GM12878 (cell line): ENCODE measurements at regions of chr15 and their contacts with region 1.

Region 1: DNA sequence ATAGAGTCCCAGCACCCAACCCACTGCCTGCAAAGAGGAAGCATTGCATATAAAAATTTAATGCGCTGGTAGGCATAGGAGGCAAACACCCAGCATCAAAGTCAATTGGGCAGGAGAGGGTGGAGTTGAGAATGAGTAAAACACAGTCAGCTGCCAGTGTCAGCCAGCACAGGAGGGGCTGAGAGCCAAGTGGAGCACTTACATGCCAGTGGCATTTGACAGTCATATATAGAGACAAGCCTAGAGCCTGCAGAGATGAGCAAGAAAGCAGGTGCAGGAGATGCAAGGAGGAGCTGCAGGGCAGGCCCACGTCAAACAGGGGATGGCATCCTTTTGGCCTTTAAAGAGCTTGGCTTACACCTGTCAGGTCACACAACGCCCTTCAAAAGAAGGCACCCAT is 27.6 kb upstream of the ZFAND6 start:
- DNase-seq: no peak
- ATAC-seq: peak; percentile 35
- H3K4me3 ChIP-seq: no peak overlapping the region
- H3K27ac ChIP-seq: no peak overlapping the region; the same call in 1 of the 2 replicates
- H3K4me1 ChIP-seq: peaks cover 47% of the 10 kb centered on the region
- H3K27me3 ChIP-seq: no peaks in the 10 kb centered on the region
- CTCF ChIP-seq: no peak
- EP300 ChIP-seq: no peak
- POLR2A ChIP-seq: no peak
- RAD21 ChIP-seq: no peak

Region 2: DNA sequence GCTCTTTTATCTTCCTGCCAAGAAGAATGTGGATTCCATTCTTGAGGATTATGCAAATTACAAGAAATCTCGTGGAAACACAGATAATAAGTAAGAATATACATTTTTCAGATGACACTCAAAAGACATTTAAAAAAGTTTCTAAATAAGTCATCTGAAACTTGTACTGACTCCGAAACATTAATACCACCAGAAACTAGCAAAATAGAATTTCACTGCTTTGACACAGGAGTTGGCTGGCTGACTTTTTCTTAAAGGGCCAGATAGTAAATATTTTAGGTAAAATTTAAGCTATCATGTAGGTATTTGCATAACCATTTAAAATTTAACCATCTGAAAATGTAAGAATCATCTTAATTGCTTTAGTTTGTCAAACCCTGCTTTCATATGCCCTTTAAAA is 1138.3 kb before region 1 on chr15:
- CTCF ChIA-PET with region 1: no interaction called
- POLR2A ChIA-PET with region 1: no interaction called
- RAD21 ChIA-PET with region 1: no interaction called
- SMC1A ChIA-PET with region 1: no interaction called
- in situ Hi-C with region 1: no loop called
- intact Hi-C with region 1: no loop called
- DNase-seq: no peak
- ATAC-seq: peak; percentile 74
- H3K4me3 ChIP-seq: peak overlapping the region; percentile 2; the same call in 1 of the 2 replicates
- H3K27ac ChIP-seq: no peak overlapping the region
- H3K4me1 ChIP-seq: peaks cover 10% of the 10 kb centered on the region
- H3K27me3 ChIP-seq: no peaks in the 10 kb centered on the region
- CTCF ChIP-seq: no peak
- EP300 ChIP-seq: no peak
- POLR2A ChIP-seq: no peak
- RAD21 ChIP-seq: no peak

Region 3: DNA sequence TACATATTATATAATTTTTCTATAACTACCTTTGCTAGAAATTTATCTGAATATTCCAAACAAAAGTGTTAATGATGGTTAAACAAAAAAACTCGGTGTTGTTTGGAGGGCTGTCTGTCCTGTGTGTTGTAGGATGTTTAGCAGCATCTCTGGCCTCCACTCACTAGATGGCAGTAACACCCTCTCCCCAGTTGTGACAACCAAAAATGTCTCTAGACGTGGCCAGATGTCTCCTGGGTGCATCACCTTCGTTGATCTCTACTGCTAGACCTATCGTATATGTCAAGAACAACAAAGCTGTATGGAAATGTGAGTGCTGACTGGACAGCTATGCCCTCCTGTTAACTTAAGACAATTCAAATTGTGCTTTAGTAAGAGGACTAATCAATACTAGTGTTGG is 735.3 kb before region 1 on chr15:
- CTCF ChIA-PET with region 1: no interaction called
- POLR2A ChIA-PET with region 1: no interaction called
- RAD21 ChIA-PET with region 1: no interaction called
- SMC1A ChIA-PET with region 1: no interaction called
- in situ Hi-C with region 1: no loop called
- intact Hi-C with region 1: no loop called
- DNase-seq: no peak
- ATAC-seq: peak; percentile 78
- H3K4me3 ChIP-seq: no peak overlapping the region
- H3K27ac ChIP-seq: no peak overlapping the region
- H3K4me1 ChIP-seq: no peaks in the 10 kb centered on the region
- H3K27me3 ChIP-seq: peaks cover 0 to 9% of the 10 kb centered on the region in 2 experiments; a peak in 1 of 4 replicates
- CTCF ChIP-seq: peak; percentile 24 to 45 (median 25); a peak in 5 of 6 replicates
- EP300 ChIP-seq: no peak
- POLR2A ChIP-seq: no peak
- RAD21 ChIP-seq: no peak

Region 4: GRCh38 chr15:80010131-80010673 is 21.6 kb before region 1 on chr15:
- CTCF ChIA-PET with region 1: no interaction called
- POLR2A ChIA-PET with region 1: interaction called, 3 read pairs
- RAD21 ChIA-PET with region 1: interaction called, 5 read pairs
- SMC1A ChIA-PET with region 1: interaction called, 98 read pairs
- in situ Hi-C with region 1: no loop called
- intact Hi-C with region 1: loop called (anchors 2 kb)
- DNase-seq: no peak
- ATAC-seq: peak; percentile 61
- H3K4me3 ChIP-seq: peak overlapping the region; percentile 32; the same call in 1 of the 2 replicates
- H3K27ac ChIP-seq: peak overlapping the region; percentile 93
- H3K4me1 ChIP-seq: peaks cover 43% of the 10 kb centered on the region
- H3K27me3 ChIP-seq: no peaks in the 10 kb centered on the region
- CTCF ChIP-seq: no peak
- EP300 ChIP-seq: no peak
- POLR2A ChIP-seq: no peak
- RAD21 ChIP-seq: no peak

Region 5: GRCh38 chr15:80019168-80019745 is 12.6 kb before region 1 on chr15:
- CTCF ChIA-PET with region 1: interaction called, 9 read pairs
- POLR2A ChIA-PET with region 1: interaction called, 31 read pairs
- RAD21 ChIA-PET with region 1: interaction called, 41 read pairs
- SMC1A ChIA-PET with region 1: interaction called, 98 read pairs
- in situ Hi-C with region 1: no loop called
- intact Hi-C with region 1: loop called (anchors 2 kb)
- DNase-seq: no peak
- ATAC-seq: peak; percentile 4
- H3K4me3 ChIP-seq: peak overlapping the region; percentile 60
- H3K27ac ChIP-seq: peak overlapping the region; percentile 92
- H3K4me1 ChIP-seq: peaks cover 30% of the 10 kb centered on the region
- H3K27me3 ChIP-seq: no peaks in the 10 kb centered on the region
- CTCF ChIP-seq: no peak
- EP300 ChIP-seq: peak; percentile 8 to 43; a peak in 1 of 4 replicates
- POLR2A ChIP-seq: no peak
- RAD21 ChIP-seq: no peak

Region 6: DNA sequence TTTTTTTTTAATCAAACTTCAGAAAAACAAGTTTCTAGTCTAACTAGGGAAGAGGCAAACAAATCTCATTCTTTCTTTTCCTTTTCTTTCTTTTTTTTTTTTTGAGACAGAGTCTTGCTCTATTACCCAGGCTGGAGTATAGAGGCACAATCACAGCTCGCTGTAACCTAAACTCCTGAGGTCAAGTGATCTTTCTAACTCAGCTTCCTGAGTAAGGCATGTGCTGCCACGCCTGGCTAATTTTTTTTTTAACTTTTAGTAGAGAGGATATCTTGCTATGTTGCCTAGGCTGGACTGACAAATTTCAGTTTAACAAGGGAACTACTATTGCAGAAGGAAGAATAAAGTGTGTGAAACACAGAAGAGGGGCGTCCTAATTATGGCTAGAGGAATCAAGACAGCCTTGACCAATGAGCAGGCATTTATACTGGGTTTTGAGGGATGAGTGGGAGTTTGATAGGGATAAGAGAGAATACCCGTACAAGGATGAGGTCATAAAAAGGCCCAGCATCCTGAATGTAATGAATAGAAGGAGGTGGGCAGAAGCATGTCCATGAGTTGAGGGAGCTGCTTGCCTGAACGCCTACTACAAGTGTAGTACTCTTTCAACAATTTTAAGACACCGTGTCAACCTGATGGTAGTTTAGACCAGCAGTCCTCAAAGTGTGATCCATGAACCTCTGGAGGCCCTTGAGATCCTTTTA is 20.9 kb after region 1 on chr15:
- CTCF ChIA-PET with region 1: interaction called, 4 read pairs
- POLR2A ChIA-PET with region 1: interaction called, 4 read pairs
- RAD21 ChIA-PET with region 1: interaction called, 4 read pairs
- SMC1A ChIA-PET with region 1: interaction called, 10 read pairs
- in situ Hi-C with region 1: no loop called
- intact Hi-C with region 1: loop called (anchors 1 kb)
- DNase-seq: no peak
- ATAC-seq: peak; percentile 46
- H3K4me3 ChIP-seq: no peak overlapping the region
- H3K27ac ChIP-seq: peak overlapping the region; percentile 37; the same call in 1 of the 2 replicates
- H3K4me1 ChIP-seq: peaks cover 29% of the 10 kb centered on the region
- H3K27me3 ChIP-seq: no peaks in the 10 kb centered on the region; a peak in 1 of 4 replicates
- CTCF ChIP-seq: no peak
- EP300 ChIP-seq: no peak; a peak in 1 of 4 replicates
- POLR2A ChIP-seq: no peak
- RAD21 ChIP-seq: no peak

Region 7: GRCh38 chr15:80081390-80081789 is 49.5 kb after region 1 on chr15:
- CTCF ChIA-PET with region 1: no interaction called
- POLR2A ChIA-PET with region 1: no interaction called
- RAD21 ChIA-PET with region 1: no interaction called
- SMC1A ChIA-PET with region 1: no interaction called
- in situ Hi-C with region 1: no loop called
- intact Hi-C with region 1: no loop called
- DNase-seq: no peak
- ATAC-seq: peak; percentile 81
- H3K4me3 ChIP-seq: no peak overlapping the region
- H3K27ac ChIP-seq: no peak overlapping the region
- H3K4me1 ChIP-seq: no peaks in the 10 kb centered on the region
- H3K27me3 ChIP-seq: no peaks in the 10 kb centered on the region
- CTCF ChIP-seq: no peak
- EP300 ChIP-seq: no peak
- POLR2A ChIP-seq: no peak
- RAD21 ChIP-seq: no peak